Posterior vena cava (tissue), 2 donors: ENCODE measurements at regions of chr22 and their contacts with region 1.

Region 1: DNA sequence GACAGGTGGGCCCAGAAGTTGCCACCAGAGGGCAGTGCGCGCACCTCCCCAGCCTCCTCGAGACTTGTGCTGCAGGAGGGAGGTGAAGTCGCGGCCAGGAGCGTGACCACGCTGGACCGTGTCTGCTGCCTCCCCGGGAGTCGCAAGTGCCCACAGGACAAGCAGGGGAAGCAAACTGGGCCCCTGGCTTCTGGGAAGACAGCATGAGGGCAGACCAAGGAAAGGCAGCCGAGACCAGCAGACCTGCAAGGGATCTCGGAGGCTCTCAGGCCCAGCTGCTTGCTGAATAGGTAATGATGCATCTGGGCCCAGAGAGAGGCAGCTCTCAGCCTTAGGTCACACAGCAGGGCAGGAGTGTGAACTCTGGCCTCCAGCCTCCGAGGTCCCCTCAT is 17.0 kb upstream of the IL2RB start:
- DNase-seq: peak; percentile 95

Region 2: GRCh38 chr22:37199103-37199759 is 32.6 kb after region 1 on chr22:
- intact Hi-C with region 1: loop called in 1 of 2 experiments (anchors 2 kb)
- DNase-seq: peak; percentile 100

Region 3: GRCh38 chr22:37260901-37261336 is 94.2 kb after region 1 on chr22:
- intact Hi-C with region 1: loop called in 1 of 2 experiments (anchors 5 kb)
- DNase-seq: peak; percentile 84